Panc1 (cell line): ENCODE measurements at regions of chr21 and their contacts with region 1.

Region 1: DNA sequence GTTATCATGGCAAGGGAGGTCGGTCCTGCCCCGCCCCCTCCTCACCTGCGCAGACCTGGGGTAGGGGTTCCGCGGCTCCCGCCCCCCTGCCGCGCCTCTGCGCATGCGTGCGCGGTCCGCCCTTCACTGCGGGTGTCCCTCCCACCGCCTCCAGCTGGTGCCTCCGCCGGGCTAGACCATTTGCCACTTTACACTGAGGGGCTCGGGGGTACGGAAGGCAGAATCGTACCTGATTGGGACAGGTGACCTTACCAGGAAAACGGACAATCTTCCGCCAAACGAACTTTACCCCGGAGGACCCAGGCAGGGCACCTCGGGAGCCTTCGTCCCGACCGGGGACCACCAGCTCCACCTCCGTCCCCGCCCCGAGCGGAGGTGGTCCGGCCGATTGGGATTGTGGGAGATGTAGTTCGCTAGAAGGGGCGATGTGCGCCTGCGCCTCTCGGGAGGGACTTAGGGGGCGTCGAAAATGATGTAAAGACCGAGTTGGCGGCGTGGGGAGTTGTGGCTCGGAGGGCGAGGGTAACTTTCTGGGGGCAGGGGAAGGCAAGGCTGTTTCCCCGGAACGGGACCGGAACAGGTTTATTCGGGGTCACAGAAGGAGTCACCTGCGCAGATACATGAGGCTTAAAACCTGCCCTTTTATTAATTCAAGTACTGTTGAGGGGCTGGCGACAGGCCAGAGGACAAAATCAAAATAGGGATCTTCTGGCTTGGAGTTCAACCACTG is at the start of gene DNAJC28:
- DNase-seq: peak; percentile 67
- ATAC-seq: peak; percentile 99
- H3K4me3 ChIP-seq: peak within 1 kb of the TSS; percentile 58 to 67
- H3K27ac ChIP-seq: peak within 1 kb of the TSS; percentile 82
- H3K4me1 ChIP-seq: no peaks in the 10 kb centered on the region
- H3K27me3 ChIP-seq: no peaks in the 10 kb centered on the region
- CTCF ChIP-seq: no peak
- total RNA-seq, gene DNAJC28: 1.5 TPM

Region 2: DNA sequence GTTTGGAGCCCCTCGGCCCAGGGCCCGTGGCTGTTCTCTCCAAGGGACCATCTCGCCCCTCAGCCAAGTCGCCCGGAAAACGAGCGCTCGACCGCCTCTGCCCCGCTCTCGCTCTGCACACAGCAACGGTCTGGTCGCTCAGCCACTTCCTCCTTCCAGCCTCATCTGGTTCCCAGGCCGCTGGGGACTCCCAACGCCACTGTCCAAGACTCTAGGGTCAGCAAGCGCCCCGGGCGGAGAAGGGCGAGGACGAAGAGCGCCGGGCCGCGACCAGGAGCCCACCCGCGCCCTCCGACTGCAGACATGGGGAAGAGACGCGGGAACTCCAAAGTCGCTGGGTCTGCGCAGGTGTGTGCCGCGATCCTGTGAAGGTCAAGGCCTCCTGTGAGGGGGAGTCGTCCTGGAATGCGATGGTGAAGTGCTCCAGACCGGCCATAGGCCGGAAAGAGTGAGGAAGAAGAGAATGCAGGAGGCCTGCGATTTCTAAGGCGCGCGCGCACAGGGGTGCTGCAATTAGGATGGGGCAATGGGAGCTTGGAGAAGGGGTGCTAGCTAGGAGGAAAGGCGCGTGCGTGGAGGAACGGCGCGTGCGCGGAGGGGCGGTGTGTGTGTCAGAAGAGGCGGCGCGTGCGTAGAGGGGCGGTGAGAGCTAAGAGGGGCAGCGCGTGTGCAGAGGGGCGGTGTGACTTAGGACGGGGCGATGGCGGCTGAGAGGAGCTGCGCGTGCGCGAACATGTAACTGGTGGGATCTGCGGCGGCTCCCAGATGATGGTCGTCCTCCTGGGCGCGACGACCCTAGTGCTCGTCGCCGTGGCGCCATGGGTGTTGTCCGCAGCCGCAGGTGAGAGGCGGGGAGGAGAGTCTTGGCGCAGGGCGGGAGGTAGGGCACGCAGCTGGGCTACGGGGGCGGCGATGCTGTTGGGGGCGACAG is 167.0 kb before region 1 on chr21 and contains the start of gene IFNAR1:
- CTCF ChIA-PET with region 1: no interaction called
- POLR2A ChIA-PET with region 1: no interaction called
- in situ Hi-C with region 1: no loop called
- intact Hi-C with region 1: no loop called
- DNase-seq: peak; percentile 73
- ATAC-seq: peak; percentile 96
- H3K4me3 ChIP-seq: peak within 1 kb of the TSS; percentile 88 to 92
- H3K27ac ChIP-seq: peak within 1 kb of the TSS; percentile 86
- H3K4me1 ChIP-seq: peaks cover 8% of the 10 kb centered on the region; the same call in 1 of the 2 replicates
- H3K27me3 ChIP-seq: no peaks in the 10 kb centered on the region
- CTCF ChIP-seq: no peak
- total RNA-seq, gene IFNAR1: 23.8 TPM

Region 3: DNA sequence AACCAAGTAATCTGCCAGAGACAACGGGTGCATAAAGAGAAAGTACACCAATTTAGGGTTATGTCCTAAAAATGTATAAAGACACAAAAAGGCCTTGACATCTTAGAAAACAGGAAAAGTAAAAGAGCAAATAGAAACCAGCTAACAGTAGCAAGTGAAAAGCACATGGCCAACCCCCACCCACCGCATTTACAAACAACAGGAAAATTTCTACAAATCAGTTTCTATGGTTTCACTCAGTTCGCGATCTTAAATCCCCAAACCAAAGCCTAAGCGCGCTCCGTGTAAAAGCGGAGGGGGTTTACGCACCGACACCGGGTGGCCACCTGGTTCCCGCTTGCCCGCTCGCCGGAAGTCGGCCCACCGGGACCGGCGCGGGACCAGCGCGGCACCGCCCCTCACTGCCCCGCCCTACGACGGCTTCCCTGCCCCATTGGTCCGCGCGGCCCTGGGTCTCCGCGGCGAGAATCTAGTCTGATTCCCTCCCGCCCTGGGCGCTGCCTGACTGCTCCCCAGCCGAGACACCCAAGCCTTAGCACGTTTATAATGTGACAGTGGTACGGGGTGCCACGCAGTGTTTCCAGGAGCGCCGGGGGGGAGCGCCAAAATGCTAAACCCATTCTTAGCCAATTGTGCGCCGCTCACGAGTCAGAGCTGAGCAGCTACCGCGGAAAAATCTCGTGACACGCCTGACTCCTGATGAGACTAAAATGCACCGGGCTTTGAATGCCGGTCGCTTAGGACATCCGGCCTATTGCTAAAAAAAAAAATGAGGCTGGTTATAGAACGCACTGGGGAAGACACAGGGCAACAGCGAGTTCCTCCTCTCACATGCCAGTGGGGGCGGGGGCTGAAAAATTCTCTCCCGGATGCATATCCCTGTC is 50.5 kb after region 1 on chr21 and contains the start of gene GART:
- CTCF ChIA-PET with region 1: no interaction called
- POLR2A ChIA-PET with region 1: interaction called, 15 read pairs
- in situ Hi-C with region 1: no loop called
- intact Hi-C with region 1: no loop called
- DNase-seq: peak; percentile 17
- ATAC-seq: peak; percentile 86
- H3K4me3 ChIP-seq: peak within 1 kb of the TSS; percentile 88 to 96
- H3K27ac ChIP-seq: peak within 1 kb of the TSS; percentile 98
- H3K4me1 ChIP-seq: peaks cover 10% of the 10 kb centered on the region
- H3K27me3 ChIP-seq: no peaks in the 10 kb centered on the region
- CTCF ChIP-seq: no peak
- total RNA-seq, gene GART: 132 TPM

Region 4: GRCh38 chr21:34276711-34277425 is 785.3 kb after region 1 on chr21:
- CTCF ChIA-PET with region 1: no interaction called
- POLR2A ChIA-PET with region 1: no interaction called
- in situ Hi-C with region 1: no loop called
- intact Hi-C with region 1: no loop called
- DNase-seq: no peak
- ATAC-seq: no peak
- H3K4me3 ChIP-seq: no peak overlapping the region
- H3K27ac ChIP-seq: no peak overlapping the region
- H3K4me1 ChIP-seq: no peaks in the 10 kb centered on the region
- H3K27me3 ChIP-seq: no peaks in the 10 kb centered on the region
- CTCF ChIP-seq: no peak